K562 (cell line): ENCODE measurements at regions of chr6 and their contacts with region 1.

Region 1: DNA sequence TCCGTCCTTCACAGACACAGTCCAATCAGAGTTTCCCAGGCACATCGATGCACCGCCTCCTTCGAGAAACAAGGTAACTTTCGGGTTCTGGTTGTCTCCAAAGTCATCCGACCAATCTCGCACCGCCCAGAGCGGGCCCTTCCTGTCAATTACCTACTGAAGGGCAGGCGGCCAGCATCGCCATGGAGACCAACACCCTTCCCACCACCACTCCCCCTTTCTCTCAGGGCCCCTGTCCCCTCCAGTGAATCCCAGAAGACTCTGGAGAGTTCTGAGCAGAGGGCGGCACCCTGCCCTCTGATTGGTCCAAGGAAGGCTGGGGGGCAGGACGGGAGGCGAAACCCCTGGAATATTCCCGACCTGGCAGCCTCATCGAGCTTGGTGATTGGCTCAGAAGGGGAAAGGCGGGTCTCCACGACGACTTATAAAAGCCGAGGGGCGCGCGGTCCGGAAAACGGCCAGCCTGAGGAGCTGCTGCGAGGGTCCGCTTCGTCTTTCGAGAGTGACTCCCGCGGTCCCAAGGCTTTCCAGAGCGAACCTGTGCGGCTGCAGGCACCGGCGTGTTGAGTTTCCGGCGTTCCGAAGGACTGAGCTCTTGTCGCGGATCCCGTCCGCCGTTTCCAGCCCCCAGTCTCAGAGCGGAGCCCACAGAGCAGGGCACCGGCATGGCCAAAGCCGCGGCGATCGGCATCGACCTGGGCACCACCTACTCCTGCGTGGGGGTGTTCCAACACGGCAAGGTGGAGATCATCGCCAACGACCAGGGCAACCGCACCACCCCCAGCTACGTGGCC is at the start of gene HSPA1B:
- DNase-seq: peak; percentile 99 to 100 (median 100)
- ATAC-seq: peak; percentile 86
- H3K4me3 ChIP-seq: peak within 1 kb of the TSS; percentile 56
- H3K27ac ChIP-seq: peak within 1 kb of the TSS; percentile 78
- H3K4me1 ChIP-seq: peaks cover 41% of the 10 kb centered on the region in 2 experiments
- H3K27me3 ChIP-seq: no peaks in the 10 kb centered on the region
- CTCF ChIP-seq: peak in 1 of 3 experiments; percentile 15; a peak in 2 of 6 replicates
- EP300 ChIP-seq: peak; percentile 89
- POLR2A ChIP-seq: peak; percentile 100
- RAD21 ChIP-seq: peak; percentile 34 to 39; a peak in 2 of 4 replicates
- polyA plus RNA-seq, gene HSPA1B: 0.27 to 0.62 TPM

Region 2: GRCh38 chr6:31680840-31681671 is 146.4 kb before region 1 on chr6 and contains the start of gene LY6G5C:
- CTCF ChIA-PET with region 1: interaction called, 16 read pairs
- POLR2A ChIA-PET with region 1: interaction called, 11 read pairs
- in situ Hi-C with region 1: no loop called
- intact Hi-C with region 1: loop called (anchors 1 kb)
- DNase-seq: peak; percentile 82 to 94 (median 88)
- ATAC-seq: peak; percentile 88
- H3K4me3 ChIP-seq: no peak within 1 kb of the TSS
- H3K27ac ChIP-seq: no peak within 1 kb of the TSS
- H3K4me1 ChIP-seq: peaks cover 10 to 24% of the 10 kb centered on the region in 2 experiments
- H3K27me3 ChIP-seq: no peaks in the 10 kb centered on the region
- CTCF ChIP-seq: peak; percentile 96 to 99 (median 99)
- EP300 ChIP-seq: peak; percentile 39; the same call in 1 of the 2 replicates
- POLR2A ChIP-seq: no peak
- RAD21 ChIP-seq: peak; percentile 99 to 100
- polyA plus RNA-seq, gene LY6G5C: 0.10 TPM in 1 of 2 experiments, not detected in the other

Region 3: DNA sequence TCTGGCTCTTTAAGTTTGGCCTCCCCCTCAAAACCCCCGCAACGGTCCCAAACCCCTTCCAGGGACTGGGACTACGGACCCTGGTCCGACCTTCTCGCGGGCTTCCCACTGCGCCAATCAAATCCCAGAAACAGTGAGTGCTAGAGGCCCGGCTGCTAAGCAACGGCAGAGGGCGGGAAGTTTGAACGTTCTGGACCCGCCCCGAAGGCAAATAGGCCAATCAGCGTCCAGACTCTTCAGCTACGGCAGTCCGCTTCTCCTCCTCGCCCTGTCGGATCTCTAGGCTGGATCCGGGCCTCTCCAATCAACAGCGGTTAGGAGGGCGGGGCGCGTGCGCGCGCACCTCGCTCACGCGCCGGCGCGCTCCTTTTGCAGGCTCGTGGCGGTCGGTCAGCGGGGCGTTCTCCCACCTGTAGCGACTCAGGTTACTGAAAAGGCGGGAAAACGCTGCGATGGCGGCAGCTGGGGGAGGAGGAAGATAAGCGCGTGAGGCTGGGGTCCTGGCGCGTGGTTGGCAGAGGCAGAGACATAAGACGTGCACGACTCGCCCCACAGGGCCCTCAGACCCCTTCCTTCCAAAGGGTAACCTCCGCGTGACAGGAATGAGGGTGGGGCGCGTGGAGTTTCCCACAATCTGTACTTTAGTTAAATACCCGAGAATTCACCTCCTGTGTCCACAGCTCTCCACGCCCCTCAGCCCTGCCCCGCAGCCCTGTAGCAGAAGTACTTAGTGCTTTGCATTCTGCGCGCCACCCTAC is 87.7 kb before region 1 on chr6 and contains the start of gene MSH5:
- CTCF ChIA-PET with region 1: no interaction called
- POLR2A ChIA-PET with region 1: interaction called, 48 read pairs
- in situ Hi-C with region 1: no loop called
- intact Hi-C with region 1: loop called (anchors 2 kb)
- DNase-seq: peak; percentile 100
- ATAC-seq: peak; percentile 84
- H3K4me3 ChIP-seq: peak within 1 kb of the TSS; percentile 64
- H3K27ac ChIP-seq: peak within 1 kb of the TSS; percentile 95
- H3K4me1 ChIP-seq: peaks cover 56 to 61% of the 10 kb centered on the region in 2 experiments
- H3K27me3 ChIP-seq: no peaks in the 10 kb centered on the region
- CTCF ChIP-seq: peak in 1 of 3 experiments; percentile 13; a peak in 1 of 6 replicates
- EP300 ChIP-seq: peak; percentile 71
- POLR2A ChIP-seq: peak; percentile 96
- RAD21 ChIP-seq: peak in 1 of 2 experiments; percentile 28; a peak in 3 of 4 replicates
- polyA plus RNA-seq, gene MSH5: 12.5 to 14.0 TPM

Region 4: DNA sequence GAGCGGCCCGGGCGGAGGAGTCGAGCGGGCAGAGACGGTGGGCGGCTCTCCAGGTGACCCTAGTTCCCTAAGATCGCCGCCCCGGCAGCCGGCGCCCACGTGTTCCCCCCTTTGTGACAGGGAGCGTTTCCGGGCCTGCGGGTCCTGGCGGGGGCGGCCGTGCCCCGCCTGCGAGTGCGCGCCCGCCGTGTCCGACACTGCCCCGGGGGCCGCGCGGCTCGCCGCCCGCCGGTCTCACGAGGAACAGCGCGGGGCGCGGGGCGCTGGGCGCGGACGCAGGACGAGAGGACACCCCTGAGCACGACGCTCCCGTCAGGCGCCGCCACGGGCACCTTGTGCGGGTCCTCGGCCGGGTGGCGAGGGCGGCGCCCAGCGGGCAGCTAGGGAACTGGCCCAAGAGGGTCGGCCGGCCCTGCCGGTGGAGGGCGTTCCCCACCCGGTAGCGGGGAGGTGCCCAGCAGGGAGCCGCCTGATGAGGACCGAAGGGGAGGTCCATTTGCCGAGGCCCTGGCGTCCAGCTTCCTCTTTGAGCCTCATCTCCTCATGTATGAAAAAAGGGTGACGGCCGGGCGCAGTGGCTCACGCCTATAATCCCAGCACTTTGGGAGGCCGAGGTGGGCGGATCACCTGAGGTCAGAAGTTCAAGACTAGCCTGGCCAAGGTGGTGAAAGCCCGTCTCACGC is 31.7 kb before region 1 on chr6 and contains the start of gene VARS1:
- CTCF ChIA-PET with region 1: interaction called, 24 read pairs
- POLR2A ChIA-PET with region 1: interaction called, 25 read pairs
- in situ Hi-C with region 1: no loop called
- intact Hi-C with region 1: loop called (anchors 1 kb)
- DNase-seq: peak; percentile 99 to 100 (median 100)
- ATAC-seq: peak; percentile 92
- H3K4me3 ChIP-seq: peak within 1 kb of the TSS; percentile 61
- H3K27ac ChIP-seq: peak within 1 kb of the TSS; percentile 97
- H3K4me1 ChIP-seq: peaks cover 17 to 44% of the 10 kb centered on the region in 2 experiments
- H3K27me3 ChIP-seq: no peaks in the 10 kb centered on the region
- CTCF ChIP-seq: peak; percentile 99 to 100 (median 100)
- EP300 ChIP-seq: peak; percentile 59; the same call in 1 of the 2 replicates
- POLR2A ChIP-seq: peak; percentile 38; the same call in 1 of the 2 replicates
- RAD21 ChIP-seq: peak; percentile 99 to 100
- polyA plus RNA-seq, gene VARS1: 2.9 to 10.4 TPM

Region 5: GRCh38 chr6:31842056-31842455 is 14.6 kb after region 1 on chr6:
- CTCF ChIA-PET with region 1: no interaction called
- POLR2A ChIA-PET with region 1: interaction called, 229 read pairs
- in situ Hi-C with region 1: no loop called
- intact Hi-C with region 1: no loop called
- DNase-seq: no peak
- ATAC-seq: peak; percentile 1; the same call in 2 of the 3 replicates
- H3K4me3 ChIP-seq: no peak overlapping the region
- H3K27ac ChIP-seq: no peak overlapping the region
- H3K4me1 ChIP-seq: peaks cover 15 to 27% of the 10 kb centered on the region in 2 experiments
- H3K27me3 ChIP-seq: no peaks in the 10 kb centered on the region
- CTCF ChIP-seq: no peak
- EP300 ChIP-seq: no peak
- POLR2A ChIP-seq: no peak
- RAD21 ChIP-seq: no peak

Region 6: GRCh38 chr6:31927242-31927862 is 99.9 kb after region 1 on chr6 and contains the start of gene C2:
- CTCF ChIA-PET with region 1: no interaction called
- POLR2A ChIA-PET with region 1: no interaction called
- in situ Hi-C with region 1: no loop called
- intact Hi-C with region 1: no loop called
- DNase-seq: no peak
- ATAC-seq: peak; percentile 51
- H3K4me3 ChIP-seq: no peak within 1 kb of the TSS
- H3K27ac ChIP-seq: no peak within 1 kb of the TSS; the same call in 2 of the 3 replicates
- H3K4me1 ChIP-seq: peaks cover 6% of the 10 kb centered on the region in 2 experiments; a peak in 4 of 5 replicates
- H3K27me3 ChIP-seq: no peaks in the 10 kb centered on the region
- CTCF ChIP-seq: no peak
- EP300 ChIP-seq: no peak
- POLR2A ChIP-seq: no peak
- RAD21 ChIP-seq: no peak
- polyA plus RNA-seq, gene C2: 0.27 TPM in 1 of 2 experiments, not detected in the other

Region 7: DNA sequence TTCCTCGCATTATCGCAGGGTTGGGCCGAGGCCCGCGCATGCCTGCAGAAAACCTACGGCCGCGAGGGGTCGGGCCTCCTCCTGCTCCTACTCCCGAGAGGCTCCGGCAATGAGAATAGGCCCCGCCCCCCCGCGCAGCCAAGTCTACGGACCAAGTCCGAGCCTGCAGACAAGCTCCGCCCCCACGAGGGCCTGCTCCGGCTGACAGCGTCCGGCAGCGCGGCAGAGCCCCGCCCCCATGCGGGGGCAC is 368.1 kb after region 1 on chr6:
- CTCF ChIA-PET with region 1: no interaction called
- POLR2A ChIA-PET with region 1: no interaction called
- in situ Hi-C with region 1: no loop called
- intact Hi-C with region 1: no loop called
- DNase-seq: peak; percentile 96 to 100 (median 97)
- ATAC-seq: peak; percentile 91
- H3K4me3 ChIP-seq: peak overlapping the region; percentile 63
- H3K27ac ChIP-seq: no peak overlapping the region
- H3K4me1 ChIP-seq: peaks cover 60 to 61% of the 10 kb centered on the region in 2 experiments
- H3K27me3 ChIP-seq: no peaks in the 10 kb centered on the region; a peak in 1 of 5 replicates
- CTCF ChIP-seq: peak; percentile 39 to 75 (median 63); a peak in 5 of 6 replicates
- EP300 ChIP-seq: 0 out of 2 replicates have a peak, but pooled peaks have one; percentile 2
- POLR2A ChIP-seq: no peak
- RAD21 ChIP-seq: no peak